Activated CD4-positive, alpha-beta memory T cell treated with anti-CD3 and anti-CD28 coated beads for 36 hours (primary cell): ENCODE measurements at regions of chr6 and their contacts with region 1.

Region 1: GRCh38 chr6:136643850-136644596 is 93.8 kb upstream of the MAP7 start:
- DNase-seq: peak; percentile 85
- H3K4me3 Mint-ChIP-seq: no peak overlapping the region
- H3K27ac Mint-ChIP-seq: no peak overlapping the region
- H3K4me1 Mint-ChIP-seq: no peaks in the 10 kb centered on the region
- H3K27me3 Mint-ChIP-seq: no peaks in the 10 kb centered on the region

Region 2: DNA sequence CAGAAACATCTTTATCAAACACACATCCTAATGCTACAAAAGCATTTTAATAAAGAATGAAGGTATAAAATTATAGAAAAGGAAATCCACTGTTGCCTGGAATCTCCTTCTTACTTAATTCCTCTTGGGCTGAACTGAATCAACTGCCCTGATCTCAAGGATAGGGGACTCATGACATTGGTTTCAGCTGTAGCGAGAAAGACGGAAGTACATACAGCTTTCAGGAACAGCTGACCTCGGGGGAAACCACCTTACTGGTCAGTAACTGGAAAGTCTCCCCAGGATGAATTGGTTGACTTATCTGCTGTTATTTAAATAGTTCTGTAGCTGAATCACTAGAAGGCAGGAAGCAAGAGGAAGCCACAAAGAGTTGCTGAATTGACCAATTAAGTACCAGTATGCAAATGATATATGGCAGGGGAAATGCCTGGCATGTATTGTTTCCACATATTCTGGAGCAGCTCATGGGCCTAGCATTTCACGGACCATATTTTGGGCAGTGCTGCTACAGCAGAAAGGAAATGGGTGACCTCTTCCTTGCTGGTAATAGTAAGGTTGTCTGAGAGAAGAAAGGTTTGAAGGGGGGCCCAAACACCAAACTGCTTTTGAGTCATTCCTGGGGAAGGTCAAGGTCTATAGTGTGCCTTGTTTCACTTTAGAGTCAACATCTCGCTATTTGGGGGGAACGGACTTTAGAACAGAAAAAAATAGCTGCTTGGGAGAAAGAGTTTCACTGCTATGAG is 50.1 kb before region 1 on chr6:
- CTCF ChIA-PET with region 1: interaction called, 7 read pairs
- POLR2A ChIA-PET with region 1: interaction called, 3 read pairs
- intact Hi-C with region 1: loop called (anchors 1 kb)
- DNase-seq: peak; percentile 79
- H3K4me3 Mint-ChIP-seq: peak overlapping the region; percentile 57
- H3K27ac Mint-ChIP-seq: peak overlapping the region; percentile 89
- H3K4me1 Mint-ChIP-seq: peaks cover 33% of the 10 kb centered on the region
- H3K27me3 Mint-ChIP-seq: no peaks in the 10 kb centered on the region

Region 3: GRCh38 chr6:136628996-136629395 is 15.0 kb before region 1 on chr6:
- CTCF ChIA-PET with region 1: interaction called, 45 read pairs
- POLR2A ChIA-PET with region 1: no interaction called
- intact Hi-C with region 1: no loop called
- DNase-seq: no peak
- H3K4me3 Mint-ChIP-seq: no peak overlapping the region
- H3K27ac Mint-ChIP-seq: no peak overlapping the region
- H3K4me1 Mint-ChIP-seq: peaks cover 7% of the 10 kb centered on the region
- H3K27me3 Mint-ChIP-seq: no peaks in the 10 kb centered on the region

Region 4: GRCh38 chr6:136696238-136696637 is 52.2 kb after region 1 on chr6:
- CTCF ChIA-PET with region 1: interaction called, 14 read pairs
- POLR2A ChIA-PET with region 1: no interaction called
- intact Hi-C with region 1: no loop called
- DNase-seq: no peak
- H3K4me3 Mint-ChIP-seq: no peak overlapping the region
- H3K27ac Mint-ChIP-seq: no peak overlapping the region
- H3K4me1 Mint-ChIP-seq: peaks cover 18% of the 10 kb centered on the region
- H3K27me3 Mint-ChIP-seq: no peaks in the 10 kb centered on the region

Region 5: GRCh38 chr6:136761227-136761922 is 117.4 kb after region 1 on chr6:
- CTCF ChIA-PET with region 1: interaction called, 14 read pairs
- POLR2A ChIA-PET with region 1: no interaction called
- intact Hi-C with region 1: no loop called
- DNase-seq: no peak
- H3K4me3 Mint-ChIP-seq: peak overlapping the region; percentile 36
- H3K27ac Mint-ChIP-seq: peak overlapping the region; percentile 63
- H3K4me1 Mint-ChIP-seq: peaks cover 66% of the 10 kb centered on the region
- H3K27me3 Mint-ChIP-seq: no peaks in the 10 kb centered on the region

Region 6: GRCh38 chr6:136803608-136804007 is 159.6 kb after region 1 on chr6:
- CTCF ChIA-PET with region 1: interaction called, 21 read pairs
- POLR2A ChIA-PET with region 1: no interaction called
- intact Hi-C with region 1: no loop called
- DNase-seq: no peak
- H3K4me3 Mint-ChIP-seq: no peak overlapping the region
- H3K27ac Mint-ChIP-seq: no peak overlapping the region
- H3K4me1 Mint-ChIP-seq: no peaks in the 10 kb centered on the region
- H3K27me3 Mint-ChIP-seq: peaks cover 5% of the 10 kb centered on the region